Endothelial cell of umbilical vein (primary cell): ENCODE measurements at regions of chr12 and their contacts with region 1.

Region 1: GRCh38 chr12:4421590-4422031 is 24.0 kb downstream of the FGF6 start:
- DNase-seq: peak; percentile 37
- H3K4me3 ChIP-seq: no peak overlapping the region
- H3K27ac ChIP-seq: no peak overlapping the region
- H3K4me1 ChIP-seq: no peaks in the 10 kb centered on the region
- H3K27me3 ChIP-seq: peaks cover 0 to 2% of the 10 kb centered on the region in 2 experiments
- CTCF ChIP-seq: peak; percentile 55 to 56
- POLR2A ChIP-seq: no peak

Region 2: GRCh38 chr12:4307593-4308333 is 113.8 kb before region 1 on chr12:
- CTCF ChIA-PET with region 1: interaction called, 4 read pairs
- POLR2A ChIA-PET with region 1: no interaction called
- dilution Hi-C with region 1: no loop called
- intact Hi-C with region 1: loop called (anchors 1 kb)
- DNase-seq: peak; percentile 71
- H3K4me3 ChIP-seq: no peak overlapping the region
- H3K27ac ChIP-seq: no peak overlapping the region
- H3K4me1 ChIP-seq: no peaks in the 10 kb centered on the region
- H3K27me3 ChIP-seq: peaks cover 7 to 10% of the 10 kb centered on the region in 2 experiments
- CTCF ChIP-seq: peak; percentile 64 to 73
- POLR2A ChIP-seq: no peak

Region 3: GRCh38 chr12:4431866-4432265 is 10.3 kb after region 1 on chr12:
- CTCF ChIA-PET with region 1: interaction called, 12 read pairs
- POLR2A ChIA-PET with region 1: no interaction called
- dilution Hi-C with region 1: no loop called
- intact Hi-C with region 1: no loop called
- DNase-seq: no peak
- H3K4me3 ChIP-seq: no peak overlapping the region
- H3K27ac ChIP-seq: no peak overlapping the region
- H3K4me1 ChIP-seq: no peaks in the 10 kb centered on the region
- H3K27me3 ChIP-seq: no peaks in the 10 kb centered on the region
- CTCF ChIP-seq: no peak
- POLR2A ChIP-seq: no peak

Region 4: GRCh38 chr12:4460761-4461160 is 39.1 kb after region 1 on chr12:
- CTCF ChIA-PET with region 1: no interaction called
- POLR2A ChIA-PET with region 1: no interaction called
- dilution Hi-C with region 1: no loop called
- intact Hi-C with region 1: loop called (anchors 1 kb)
- DNase-seq: no peak
- H3K4me3 ChIP-seq: no peak overlapping the region
- H3K27ac ChIP-seq: no peak overlapping the region
- H3K4me1 ChIP-seq: no peaks in the 10 kb centered on the region
- H3K27me3 ChIP-seq: peaks cover 0 to 3% of the 10 kb centered on the region in 2 experiments
- CTCF ChIP-seq: no peak
- POLR2A ChIP-seq: no peak

Region 5: GRCh38 chr12:4477129-4477528 is 55.5 kb after region 1 on chr12:
- CTCF ChIA-PET with region 1: no interaction called
- POLR2A ChIA-PET with region 1: no interaction called
- dilution Hi-C with region 1: no loop called
- intact Hi-C with region 1: no loop called
- DNase-seq: no peak
- H3K4me3 ChIP-seq: no peak overlapping the region
- H3K27ac ChIP-seq: no peak overlapping the region
- H3K4me1 ChIP-seq: no peaks in the 10 kb centered on the region
- H3K27me3 ChIP-seq: peaks cover 2 to 6% of the 10 kb centered on the region in 2 experiments
- CTCF ChIP-seq: no peak
- POLR2A ChIP-seq: no peak

Region 6: DNA sequence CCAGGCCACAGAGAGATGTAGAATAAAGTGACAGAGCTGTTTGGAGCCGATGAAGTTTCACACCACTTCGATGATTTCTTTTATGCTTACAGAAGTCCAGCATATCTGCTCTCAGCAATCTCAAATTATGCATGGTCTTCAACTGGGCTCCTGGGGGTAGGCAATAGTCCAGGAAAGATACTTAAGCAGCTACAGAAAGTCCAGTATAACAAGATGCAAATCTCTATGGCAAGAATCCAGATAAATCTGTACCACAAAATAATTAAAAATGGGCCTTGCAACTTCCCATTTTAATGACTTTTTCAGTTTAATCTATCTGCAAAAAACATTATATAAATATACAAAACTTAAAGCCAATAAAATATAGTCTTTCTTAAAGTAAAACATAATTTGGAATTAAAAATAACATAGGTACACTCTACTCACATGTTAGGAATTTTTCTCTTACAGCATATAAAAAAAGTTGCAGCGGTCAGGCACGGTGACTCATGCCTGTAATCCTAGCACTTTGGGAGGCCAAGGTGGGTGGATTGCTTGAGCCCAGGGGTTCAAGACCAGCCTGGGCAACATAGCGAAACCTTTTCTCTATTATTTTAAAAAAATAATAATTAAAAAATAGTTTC is 96.6 kb after region 1 on chr12:
- CTCF ChIA-PET with region 1: no interaction called
- POLR2A ChIA-PET with region 1: no interaction called
- dilution Hi-C with region 1: no loop called
- intact Hi-C with region 1: loop called (anchors 2 kb)
- DNase-seq: no peak
- H3K4me3 ChIP-seq: no peak overlapping the region
- H3K27ac ChIP-seq: no peak overlapping the region
- H3K4me1 ChIP-seq: no peaks in the 10 kb centered on the region
- H3K27me3 ChIP-seq: no peaks in the 10 kb centered on the region
- CTCF ChIP-seq: no peak
- POLR2A ChIP-seq: no peak

Region 7: DNA sequence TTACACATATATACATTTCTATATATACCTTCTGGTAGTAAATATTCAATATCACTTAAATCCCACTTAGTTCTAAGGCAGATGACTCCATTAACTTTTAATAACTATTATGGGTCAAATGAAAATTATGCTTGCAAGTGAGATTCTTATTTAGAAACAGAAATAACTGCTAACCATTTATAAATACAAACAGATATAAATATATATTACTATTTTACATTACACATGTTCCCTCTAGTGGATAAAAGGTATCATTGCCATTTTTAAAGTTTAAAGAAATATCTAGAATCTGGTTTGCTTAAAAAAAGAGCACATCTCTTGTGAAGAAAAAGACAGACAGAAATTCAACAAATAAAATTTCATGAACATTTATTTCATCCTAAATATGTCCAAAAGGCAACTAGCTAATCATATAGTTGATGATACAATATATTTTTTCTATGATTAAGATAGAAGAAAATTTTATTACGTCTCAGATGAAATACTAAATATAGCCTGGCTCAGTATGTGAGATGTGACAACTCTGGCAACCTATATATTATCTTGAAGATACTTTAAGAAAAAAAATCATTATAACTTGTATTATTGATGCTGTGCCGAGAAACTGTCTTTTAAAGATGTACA is 105.4 kb after region 1 on chr12:
- CTCF ChIA-PET with region 1: interaction called, 5 read pairs
- POLR2A ChIA-PET with region 1: no interaction called
- dilution Hi-C with region 1: no loop called
- intact Hi-C with region 1: loop called (anchors 1 kb)
- DNase-seq: peak; percentile 20
- H3K4me3 ChIP-seq: no peak overlapping the region
- H3K27ac ChIP-seq: no peak overlapping the region
- H3K4me1 ChIP-seq: no peaks in the 10 kb centered on the region
- H3K27me3 ChIP-seq: no peaks in the 10 kb centered on the region
- CTCF ChIP-seq: peak in 1 of 2 donors; percentile 20
- POLR2A ChIP-seq: no peak

Region 8: GRCh38 chr12:4763549-4763948 is 341.9 kb after region 1 on chr12:
- CTCF ChIA-PET with region 1: interaction called, 19 read pairs
- POLR2A ChIA-PET with region 1: no interaction called
- dilution Hi-C with region 1: no loop called
- intact Hi-C with region 1: loop called (anchors 2 kb)
- DNase-seq: no peak
- H3K4me3 ChIP-seq: no peak overlapping the region
- H3K27ac ChIP-seq: no peak overlapping the region
- H3K4me1 ChIP-seq: no peaks in the 10 kb centered on the region
- H3K27me3 ChIP-seq: peaks cover 0 to 2% of the 10 kb centered on the region in 2 experiments
- CTCF ChIP-seq: no peak
- POLR2A ChIP-seq: no peak